Calu3 (cell line): ENCODE measurements at regions of chr14 and their contacts with region 1.

Region 1: DNA sequence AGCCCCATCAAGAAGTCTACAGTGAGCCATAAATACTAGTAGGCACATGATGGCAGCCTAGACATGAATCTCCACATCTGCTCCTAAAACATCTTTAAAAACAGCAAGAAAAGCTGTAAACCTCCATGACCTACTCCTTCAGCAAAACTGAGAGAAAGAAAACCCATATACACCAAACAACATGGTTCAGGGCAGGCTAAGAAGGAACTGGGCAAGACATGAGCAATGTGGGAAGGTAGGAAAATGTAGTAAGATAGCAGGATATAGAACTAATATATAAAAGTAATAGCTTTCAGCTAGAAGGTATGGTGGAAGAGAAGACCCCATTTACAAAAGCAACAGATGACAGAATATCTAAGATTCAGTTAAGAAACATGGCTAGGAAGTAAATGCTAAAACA is 88.8 kb downstream of the RPS6KA5 start:
- DNase-seq: no peak
- H3K4me3 Mint-ChIP-seq: no peak overlapping the region
- H3K27ac Mint-ChIP-seq: peak overlapping the region; percentile 15
- H3K4me1 Mint-ChIP-seq: peaks cover 11% of the 10 kb centered on the region
- H3K27me3 Mint-ChIP-seq: no peaks in the 10 kb centered on the region
- CTCF ChIP-seq: no peak

Region 2: DNA sequence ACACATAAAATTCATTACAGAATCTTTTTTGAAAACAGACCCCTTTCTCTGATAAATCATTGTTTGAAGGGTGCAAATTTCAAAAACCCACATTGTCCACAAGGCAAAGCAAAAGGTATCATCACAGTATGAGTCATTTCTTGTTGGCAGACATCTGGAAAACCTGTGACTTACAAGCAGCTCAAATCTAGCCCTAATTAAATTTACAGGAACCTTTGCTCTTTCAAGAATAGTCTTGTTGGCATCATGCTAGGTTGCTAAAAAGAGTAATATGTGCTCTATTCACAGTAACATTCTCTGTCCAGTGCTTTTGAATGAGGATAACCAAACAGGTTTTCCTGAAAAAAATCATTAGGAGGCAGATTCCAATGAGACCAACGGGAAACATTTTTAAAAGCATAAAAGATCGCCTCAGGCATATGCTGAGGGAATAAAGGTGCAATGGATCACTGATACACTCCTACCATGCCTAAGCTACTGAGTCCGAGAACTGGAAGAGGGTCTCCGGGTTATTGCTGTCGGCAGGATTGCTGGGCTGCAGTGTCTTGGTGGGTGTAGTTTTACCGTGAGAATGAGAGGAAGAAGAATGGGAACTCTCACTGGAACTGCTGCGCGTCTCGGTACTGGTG is 100.0 kb before region 1 on chr14:
- CTCF ChIA-PET with region 1: no interaction called
- intact Hi-C with region 1: no loop called
- DNase-seq: no peak
- H3K4me3 Mint-ChIP-seq: no peak overlapping the region
- H3K27ac Mint-ChIP-seq: no peak overlapping the region
- H3K4me1 Mint-ChIP-seq: no peaks in the 10 kb centered on the region
- H3K27me3 Mint-ChIP-seq: no peaks in the 10 kb centered on the region
- CTCF ChIP-seq: no peak

Region 3: DNA sequence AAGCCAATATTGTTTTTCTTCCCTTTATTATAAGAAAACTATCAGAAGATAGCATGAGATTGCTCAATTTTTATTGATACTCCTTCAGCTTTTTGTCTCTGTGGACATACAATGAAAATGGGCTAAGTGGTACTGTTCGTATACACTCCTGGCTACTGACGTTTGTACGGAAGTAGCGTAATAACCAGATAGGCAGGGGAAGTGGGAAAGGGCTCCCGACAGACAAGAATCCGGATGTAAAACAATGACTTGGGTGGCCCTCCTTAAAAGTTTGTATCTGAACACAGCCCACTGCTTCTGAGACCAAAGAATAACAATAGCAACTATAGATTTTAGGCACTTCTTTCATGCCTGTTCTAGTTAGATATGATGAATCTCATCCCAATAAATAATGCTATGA is 10.9 kb before region 1 on chr14:
- CTCF ChIA-PET with region 1: no interaction called
- intact Hi-C with region 1: loop called (anchors 1 kb)
- DNase-seq: no peak
- H3K4me3 Mint-ChIP-seq: no peak overlapping the region
- H3K27ac Mint-ChIP-seq: no peak overlapping the region
- H3K4me1 Mint-ChIP-seq: peaks cover 8% of the 10 kb centered on the region
- H3K27me3 Mint-ChIP-seq: no peaks in the 10 kb centered on the region
- CTCF ChIP-seq: no peak